Cardiac septum (tissue), 1 donor: ENCODE measurements at regions of chr1 and their contacts with region 1.

Region 1: GRCh38 chr1:150578965-150579798 is at the start of gene MCL1:
- DNase-seq: peak; percentile 97
- total RNA-seq, gene MCL1: 145 TPM

Region 2: DNA sequence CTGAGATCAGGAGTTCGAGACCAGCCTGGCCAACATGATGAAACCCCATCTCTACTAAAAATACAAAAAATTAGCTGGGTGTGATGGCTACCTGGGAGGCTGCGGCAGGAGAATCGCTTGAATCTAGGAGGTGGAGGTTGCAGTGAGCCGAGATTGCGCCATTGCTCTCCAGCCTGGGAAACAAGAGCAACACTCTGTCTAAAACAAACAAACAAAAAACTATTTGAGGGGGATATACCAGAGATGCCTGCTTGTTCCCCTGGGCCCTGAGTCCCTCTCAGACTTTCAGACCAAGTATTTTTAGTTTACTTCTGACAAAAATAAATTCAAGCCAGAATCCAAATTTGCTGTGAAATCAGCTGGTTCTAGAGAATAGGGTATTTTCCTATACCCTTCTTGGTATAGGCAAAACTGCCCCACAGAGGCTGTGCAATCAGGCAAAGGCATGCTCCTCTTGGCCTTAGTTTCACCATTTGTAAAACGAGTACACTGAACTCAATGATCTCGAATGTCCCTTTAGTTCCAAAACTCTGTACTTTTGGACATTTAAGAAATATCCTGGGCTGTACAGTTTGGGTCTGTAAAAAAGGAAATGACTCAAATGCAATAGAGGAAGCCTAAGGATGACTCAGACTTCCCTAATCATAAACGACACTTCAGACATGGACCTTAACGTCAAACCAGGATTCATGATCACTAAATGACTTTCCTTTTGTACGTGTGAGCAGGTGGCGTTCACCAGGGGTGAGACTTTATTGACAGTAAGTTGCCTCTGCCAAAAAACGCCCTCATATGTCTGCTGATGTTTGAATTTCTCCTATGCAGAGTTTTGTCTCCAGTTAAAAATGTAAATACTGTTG is 34.1 kb after region 1 on chr1:
- intact Hi-C with region 1: loop called (anchors 1 kb)
- DNase-seq: no peak

Region 3: GRCh38 chr1:150621497-150622302 is 42.5 kb after region 1 on chr1:
- intact Hi-C with region 1: loop called (anchors 2 kb)
- DNase-seq: no peak

Region 4: DNA sequence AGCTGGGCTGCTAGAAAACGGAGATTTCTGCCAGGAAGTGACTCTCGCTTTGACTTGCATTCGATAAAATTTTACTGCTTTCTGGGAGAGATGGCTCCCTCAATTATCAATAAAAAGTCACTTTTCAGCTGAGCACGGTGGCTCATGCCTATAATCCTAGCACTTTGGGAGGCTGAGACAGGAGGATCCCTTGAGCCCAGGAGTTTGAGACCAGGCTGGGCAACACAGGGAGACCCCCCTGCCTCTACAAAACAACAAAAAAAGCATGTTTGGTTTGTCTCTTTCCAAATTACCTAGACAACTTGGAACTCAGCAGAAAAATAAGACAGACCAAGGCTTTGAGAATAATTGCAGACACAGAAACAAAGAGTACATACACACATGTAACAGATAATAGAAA is 63.1 kb after region 1 on chr1:
- intact Hi-C with region 1: no loop called
- DNase-seq: no peak

Region 5: DNA sequence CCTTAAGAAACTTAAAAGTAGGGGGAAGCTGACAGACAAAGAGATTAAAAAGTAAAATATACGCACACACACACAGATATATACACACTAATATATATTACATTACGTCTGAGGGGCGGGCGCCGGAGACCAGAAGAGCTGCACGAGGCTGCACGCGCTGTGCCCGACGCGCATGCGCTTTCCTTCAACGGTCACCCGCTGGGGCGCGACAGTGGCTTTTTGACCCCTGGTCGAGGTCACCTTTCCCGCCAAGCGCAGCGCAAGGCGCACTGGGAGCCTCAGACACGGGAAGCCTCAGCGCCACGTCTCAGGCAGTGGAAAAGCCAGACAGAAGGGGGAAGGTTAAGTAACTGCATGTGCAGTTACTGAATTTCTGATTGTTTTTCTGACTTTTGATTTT is 141.5 kb after region 1 on chr1 and contains the start of gene HORMAD1:
- intact Hi-C with region 1: no loop called
- DNase-seq: no peak
- total RNA-seq, gene HORMAD1: not detected